ENCODE measurements at regions of chr11 and their contacts with region 1.

Region 1: GRCh38 chr11:128472128-128473089 is 114.9 kb downstream of the ETS1 start:
- DNase-seq: peak; percentile 83
- ATAC-seq: peak; percentile 67
- H3K4me3 Mint-ChIP-seq: peak overlapping the region; percentile 72
- H3K27ac Mint-ChIP-seq: peak overlapping the region; percentile 99
- H3K4me1 Mint-ChIP-seq: peaks cover 97% of the 10 kb centered on the region
- H3K27me3 Mint-ChIP-seq: no peaks in the 10 kb centered on the region

Region 2: GRCh38 chr11:128039140-128040021 is 433.0 kb before region 1 on chr11:
- CTCF ChIA-PET with region 1: no interaction called
- POLR2A ChIA-PET with region 1: interaction called, 3 read pairs
- intact Hi-C with region 1: loop called in 1 of 2 experiments (anchors 5 kb)
- DNase-seq: peak; percentile 88
- ATAC-seq: peak; percentile 94
- H3K4me3 Mint-ChIP-seq: peak overlapping the region; percentile 31
- H3K27ac Mint-ChIP-seq: peak overlapping the region; percentile 85
- H3K4me1 Mint-ChIP-seq: peaks cover 39% of the 10 kb centered on the region
- H3K27me3 Mint-ChIP-seq: no peaks in the 10 kb centered on the region

Region 3: GRCh38 chr11:128232588-128232987 is 239.8 kb before region 1 on chr11:
- CTCF ChIA-PET with region 1: no interaction called
- POLR2A ChIA-PET with region 1: interaction called, 4 read pairs
- intact Hi-C with region 1: loop called (anchors 5 kb)
- DNase-seq: peak; percentile 81
- ATAC-seq: peak; percentile 63
- H3K4me3 Mint-ChIP-seq: no peak overlapping the region
- H3K27ac Mint-ChIP-seq: peak overlapping the region; percentile 92
- H3K4me1 Mint-ChIP-seq: peaks cover 60% of the 10 kb centered on the region
- H3K27me3 Mint-ChIP-seq: no peaks in the 10 kb centered on the region

Region 4: DNA sequence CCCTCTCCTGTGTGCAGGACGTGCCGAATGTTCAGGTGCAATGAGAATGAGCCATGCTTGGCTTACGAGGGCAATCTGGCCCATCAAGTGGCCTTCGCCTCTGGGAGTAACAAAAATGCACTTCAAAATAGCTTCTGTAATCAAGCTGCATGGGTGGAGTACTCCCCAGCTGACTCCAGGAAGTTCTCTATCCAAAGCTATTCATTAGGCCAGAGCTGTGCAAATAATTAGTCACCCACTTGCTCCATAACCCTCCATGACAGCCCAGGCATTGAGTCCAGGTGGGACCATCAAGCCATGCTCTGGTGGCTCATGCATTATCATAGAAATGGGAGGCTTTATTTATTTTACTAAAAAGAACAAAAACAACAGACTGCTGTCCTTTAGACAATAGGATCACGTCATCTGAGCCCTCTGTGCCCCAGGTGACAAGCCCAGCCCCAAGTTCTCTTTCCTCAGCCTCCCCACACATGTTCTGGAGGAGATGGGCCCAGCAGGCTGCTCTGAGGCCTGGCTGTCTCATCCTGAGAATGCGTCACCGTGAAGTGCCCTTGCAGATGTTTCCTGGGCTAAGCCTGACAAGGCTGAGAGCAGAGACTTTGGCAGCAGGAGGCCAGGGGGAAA is 129.8 kb before region 1 on chr11:
- CTCF ChIA-PET with region 1: interaction called, 11 read pairs
- POLR2A ChIA-PET with region 1: interaction called, 15 read pairs
- intact Hi-C with region 1: loop called (anchors 1 kb)
- DNase-seq: peak; percentile 91
- ATAC-seq: peak; percentile 68
- H3K4me3 Mint-ChIP-seq: peak overlapping the region; percentile 65
- H3K27ac Mint-ChIP-seq: peak overlapping the region; percentile 95
- H3K4me1 Mint-ChIP-seq: peaks cover 97% of the 10 kb centered on the region
- H3K27me3 Mint-ChIP-seq: no peaks in the 10 kb centered on the region

Region 5: DNA sequence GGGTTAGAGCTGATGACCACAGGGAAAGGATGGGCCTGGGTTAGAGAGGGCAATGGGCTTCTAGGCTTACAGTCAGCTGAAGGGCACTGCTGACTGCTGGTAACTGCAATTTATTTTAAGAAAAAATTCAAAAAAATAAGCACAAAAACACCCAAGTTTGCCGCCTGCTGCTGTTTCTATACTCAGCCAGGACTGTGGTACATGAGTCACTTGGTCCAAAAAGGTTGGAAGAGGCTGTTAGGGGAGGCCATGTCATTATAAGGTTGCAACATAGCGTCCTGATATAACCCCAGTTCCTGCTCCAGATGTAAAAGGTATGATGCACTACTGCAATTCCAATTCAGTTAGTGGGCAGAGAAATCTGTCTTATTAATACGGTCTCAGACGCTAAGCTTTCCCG is 16.1 kb after region 1 on chr11:
- CTCF ChIA-PET with region 1: interaction called, 41 read pairs
- POLR2A ChIA-PET with region 1: interaction called, 42 read pairs
- intact Hi-C with region 1: loop called in 1 of 2 experiments (anchors 1 kb)
- DNase-seq: peak; percentile 65
- ATAC-seq: peak; percentile 65
- H3K4me3 Mint-ChIP-seq: peak overlapping the region; percentile 48
- H3K27ac Mint-ChIP-seq: peak overlapping the region; percentile 89
- H3K4me1 Mint-ChIP-seq: peaks cover 98% of the 10 kb centered on the region
- H3K27me3 Mint-ChIP-seq: no peaks in the 10 kb centered on the region

Region 6: GRCh38 chr11:128553662-128554362 is 81.4 kb after region 1 on chr11:
- CTCF ChIA-PET with region 1: no interaction called
- POLR2A ChIA-PET with region 1: interaction called, 4 read pairs
- intact Hi-C with region 1: loop called (anchors 2 kb)
- DNase-seq: no peak
- ATAC-seq: no peak
- H3K4me3 Mint-ChIP-seq: no peak overlapping the region
- H3K27ac Mint-ChIP-seq: peak overlapping the region; percentile 94
- H3K4me1 Mint-ChIP-seq: peaks cover 56% of the 10 kb centered on the region
- H3K27me3 Mint-ChIP-seq: no peaks in the 10 kb centered on the region

Region 7: DNA sequence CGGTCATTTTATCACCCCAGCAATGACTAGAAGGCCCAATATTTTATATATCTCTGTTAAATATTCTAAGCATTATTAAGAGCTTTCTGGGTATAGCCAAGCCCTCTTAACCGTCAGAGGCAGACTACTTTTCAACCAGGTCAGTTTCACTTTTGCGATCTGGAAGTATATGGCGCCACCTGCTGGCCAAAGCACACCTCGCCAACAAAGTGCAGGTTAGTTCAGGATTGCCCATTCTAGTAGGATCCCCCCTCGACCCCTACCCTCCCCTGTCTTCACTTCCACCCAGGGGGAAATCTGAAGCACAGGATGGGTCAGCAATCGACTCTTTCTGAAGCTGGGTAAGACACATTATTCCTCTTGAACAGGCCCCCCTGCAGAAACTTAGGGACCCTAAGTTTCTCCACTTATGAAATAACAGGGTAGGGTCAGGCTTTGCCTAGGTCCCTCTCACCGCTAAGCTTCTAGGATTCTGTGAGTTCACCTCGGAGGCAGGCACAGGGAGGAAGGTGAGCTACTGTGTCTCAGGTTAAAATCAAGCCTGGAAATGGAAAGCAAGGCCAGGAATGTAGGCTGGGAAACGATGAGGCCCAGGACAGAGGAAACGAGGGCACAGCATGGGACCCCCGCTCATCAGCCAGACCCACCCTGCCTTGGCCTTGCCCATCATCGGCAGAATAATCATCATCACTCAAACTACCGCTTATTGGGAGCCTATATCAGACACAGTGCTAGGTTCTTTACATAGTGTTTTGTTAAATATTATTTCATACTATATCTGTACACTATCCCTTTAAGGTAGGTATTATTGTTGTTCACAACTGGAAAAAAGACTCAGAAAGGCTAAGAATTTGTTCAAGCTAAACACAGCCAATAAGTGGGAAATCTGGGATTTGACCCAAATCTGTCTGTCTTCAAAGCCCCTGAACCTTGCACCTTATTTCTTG is 359.0 kb after region 1 on chr11:
- CTCF ChIA-PET with region 1: no interaction called
- POLR2A ChIA-PET with region 1: no interaction called
- intact Hi-C with region 1: loop called in 1 of 2 experiments (anchors 10 kb)
- DNase-seq: peak; percentile 93
- ATAC-seq: peak; percentile 81
- H3K4me3 Mint-ChIP-seq: peak overlapping the region; percentile 57
- H3K27ac Mint-ChIP-seq: peak overlapping the region; percentile 93
- H3K4me1 Mint-ChIP-seq: peaks cover 21% of the 10 kb centered on the region
- H3K27me3 Mint-ChIP-seq: no peaks in the 10 kb centered on the region

Measured in activated CD4-positive, alpha-beta T cell treated with anti-CD3 and anti-CD28 coated beads for 36 hours (primary cell).